GM12878 (cell line): ENCODE measurements at regions of chr5 and their contacts with region 1.

Region 1: DNA sequence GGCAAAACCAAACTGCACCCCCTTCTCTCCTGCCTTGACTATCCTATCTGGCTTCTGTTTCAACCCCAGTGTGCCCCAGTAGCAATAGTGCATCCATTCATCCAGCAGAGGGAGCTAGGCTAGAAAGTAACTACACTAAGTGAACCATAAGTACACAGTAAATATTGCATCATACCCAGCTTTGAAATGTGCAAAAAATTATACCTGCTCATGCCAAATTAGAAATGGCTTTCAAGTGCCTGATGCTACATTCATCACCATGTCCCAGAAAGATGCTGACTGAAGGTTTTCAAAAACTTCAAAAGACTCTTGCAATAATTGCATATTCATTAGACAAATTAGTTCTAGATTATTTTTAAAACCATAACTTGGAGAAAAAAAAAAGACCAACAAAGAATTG is 153.5 kb downstream of the PRELID2 start:
- DNase-seq: peak; percentile 32
- ATAC-seq: peak; percentile 100
- H3K4me3 ChIP-seq: no peak overlapping the region
- H3K27ac ChIP-seq: no peak overlapping the region
- H3K4me1 ChIP-seq: no peaks in the 10 kb centered on the region
- H3K27me3 ChIP-seq: no peaks in the 10 kb centered on the region
- CTCF ChIP-seq: peak; percentile 71 to 78 (median 78)
- EP300 ChIP-seq: no peak
- POLR2A ChIP-seq: no peak
- RAD21 ChIP-seq: peak; percentile 61

Region 2: GRCh38 chr5:145668714-145669113 is 13.0 kb before region 1 on chr5:
- CTCF ChIA-PET with region 1: interaction called, 14 read pairs
- POLR2A ChIA-PET with region 1: no interaction called
- RAD21 ChIA-PET with region 1: no interaction called
- SMC1A ChIA-PET with region 1: no interaction called
- in situ Hi-C with region 1: no loop called
- intact Hi-C with region 1: no loop called
- DNase-seq: no peak
- ATAC-seq: peak; percentile 38; the same call in 2 of the 3 replicates
- H3K4me3 ChIP-seq: no peak overlapping the region
- H3K27ac ChIP-seq: no peak overlapping the region
- H3K4me1 ChIP-seq: no peaks in the 10 kb centered on the region
- H3K27me3 ChIP-seq: no peaks in the 10 kb centered on the region; a peak in 1 of 4 replicates
- CTCF ChIP-seq: no peak
- EP300 ChIP-seq: no peak
- POLR2A ChIP-seq: no peak
- RAD21 ChIP-seq: no peak

Region 3: DNA sequence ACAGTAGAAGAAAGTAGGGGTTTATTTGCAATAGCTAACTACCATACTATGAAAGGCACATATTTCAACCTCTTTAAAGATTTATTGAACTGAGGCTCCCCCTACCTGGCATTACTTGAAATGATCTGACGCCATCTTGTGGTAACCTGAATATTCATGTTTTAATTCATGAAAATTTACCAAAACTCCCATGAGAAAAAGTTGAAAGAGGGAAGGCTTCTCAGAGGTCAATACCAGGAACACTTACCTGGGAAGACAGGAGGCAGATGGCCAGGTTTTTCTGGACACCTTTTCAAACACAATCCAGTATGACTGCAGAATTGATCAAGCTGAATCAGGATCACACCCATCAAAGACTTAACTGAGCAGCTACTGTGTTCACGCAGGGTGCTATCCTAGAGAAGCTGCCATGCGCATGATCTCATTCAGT is 144.1 kb after region 1 on chr5:
- CTCF ChIA-PET with region 1: interaction called, 13 read pairs
- POLR2A ChIA-PET with region 1: no interaction called
- RAD21 ChIA-PET with region 1: interaction called, 5 read pairs
- SMC1A ChIA-PET with region 1: interaction called, 4 read pairs
- in situ Hi-C with region 1: no loop called
- intact Hi-C with region 1: loop called (anchors 1 kb)
- DNase-seq: no peak
- ATAC-seq: peak; percentile 82
- H3K4me3 ChIP-seq: no peak overlapping the region
- H3K27ac ChIP-seq: no peak overlapping the region
- H3K4me1 ChIP-seq: no peaks in the 10 kb centered on the region
- H3K27me3 ChIP-seq: no peaks in the 10 kb centered on the region
- CTCF ChIP-seq: peak; percentile 61 to 73 (median 70)
- EP300 ChIP-seq: no peak
- POLR2A ChIP-seq: no peak
- RAD21 ChIP-seq: peak; percentile 65

Region 4: GRCh38 chr5:145872486-145872885 is 190.8 kb after region 1 on chr5:
- CTCF ChIA-PET with region 1: no interaction called
- POLR2A ChIA-PET with region 1: no interaction called
- RAD21 ChIA-PET with region 1: no interaction called
- SMC1A ChIA-PET with region 1: no interaction called
- in situ Hi-C with region 1: no loop called
- intact Hi-C with region 1: no loop called
- DNase-seq: no peak
- ATAC-seq: no peak
- H3K4me3 ChIP-seq: no peak overlapping the region
- H3K27ac ChIP-seq: no peak overlapping the region
- H3K4me1 ChIP-seq: no peaks in the 10 kb centered on the region
- H3K27me3 ChIP-seq: no peaks in the 10 kb centered on the region
- CTCF ChIP-seq: no peak
- EP300 ChIP-seq: no peak
- POLR2A ChIP-seq: no peak
- RAD21 ChIP-seq: no peak

Region 5: GRCh38 chr5:145903113-145903512 is 221.4 kb after region 1 on chr5:
- CTCF ChIA-PET with region 1: no interaction called
- POLR2A ChIA-PET with region 1: no interaction called
- RAD21 ChIA-PET with region 1: no interaction called
- SMC1A ChIA-PET with region 1: no interaction called
- in situ Hi-C with region 1: no loop called
- intact Hi-C with region 1: no loop called
- DNase-seq: no peak
- ATAC-seq: peak; percentile 62
- H3K4me3 ChIP-seq: no peak overlapping the region
- H3K27ac ChIP-seq: no peak overlapping the region
- H3K4me1 ChIP-seq: no peaks in the 10 kb centered on the region
- H3K27me3 ChIP-seq: no peaks in the 10 kb centered on the region; a peak in 1 of 4 replicates
- CTCF ChIP-seq: no peak; a peak in 1 of 6 replicates
- EP300 ChIP-seq: no peak
- POLR2A ChIP-seq: no peak
- RAD21 ChIP-seq: no peak

Region 6: GRCh38 chr5:146049014-146049703 is 367.5 kb after region 1 on chr5:
- CTCF ChIA-PET with region 1: interaction called, 3 read pairs
- POLR2A ChIA-PET with region 1: no interaction called
- RAD21 ChIA-PET with region 1: no interaction called
- SMC1A ChIA-PET with region 1: no interaction called
- in situ Hi-C with region 1: no loop called
- intact Hi-C with region 1: loop called (anchors 5 kb)
- DNase-seq: no peak
- ATAC-seq: peak; percentile 59
- H3K4me3 ChIP-seq: no peak overlapping the region
- H3K27ac ChIP-seq: no peak overlapping the region
- H3K4me1 ChIP-seq: no peaks in the 10 kb centered on the region
- H3K27me3 ChIP-seq: no peaks in the 10 kb centered on the region; a peak in 3 of 4 replicates
- CTCF ChIP-seq: peak; percentile 34 to 52 (median 40); a peak in 4 of 6 replicates
- EP300 ChIP-seq: no peak
- POLR2A ChIP-seq: no peak
- RAD21 ChIP-seq: peak; percentile 68

Region 7: GRCh38 chr5:146124580-146124979 is 442.9 kb after region 1 on chr5:
- CTCF ChIA-PET with region 1: interaction called, 8 read pairs
- POLR2A ChIA-PET with region 1: no interaction called
- RAD21 ChIA-PET with region 1: no interaction called
- SMC1A ChIA-PET with region 1: interaction called, 3 read pairs
- in situ Hi-C with region 1: loop called (anchors 10 kb)
- intact Hi-C with region 1: no loop called
- DNase-seq: no peak
- ATAC-seq: no peak
- H3K4me3 ChIP-seq: no peak overlapping the region
- H3K27ac ChIP-seq: no peak overlapping the region
- H3K4me1 ChIP-seq: no peaks in the 10 kb centered on the region
- H3K27me3 ChIP-seq: no peaks in the 10 kb centered on the region
- CTCF ChIP-seq: no peak
- EP300 ChIP-seq: no peak
- POLR2A ChIP-seq: no peak
- RAD21 ChIP-seq: no peak

Region 8: DNA sequence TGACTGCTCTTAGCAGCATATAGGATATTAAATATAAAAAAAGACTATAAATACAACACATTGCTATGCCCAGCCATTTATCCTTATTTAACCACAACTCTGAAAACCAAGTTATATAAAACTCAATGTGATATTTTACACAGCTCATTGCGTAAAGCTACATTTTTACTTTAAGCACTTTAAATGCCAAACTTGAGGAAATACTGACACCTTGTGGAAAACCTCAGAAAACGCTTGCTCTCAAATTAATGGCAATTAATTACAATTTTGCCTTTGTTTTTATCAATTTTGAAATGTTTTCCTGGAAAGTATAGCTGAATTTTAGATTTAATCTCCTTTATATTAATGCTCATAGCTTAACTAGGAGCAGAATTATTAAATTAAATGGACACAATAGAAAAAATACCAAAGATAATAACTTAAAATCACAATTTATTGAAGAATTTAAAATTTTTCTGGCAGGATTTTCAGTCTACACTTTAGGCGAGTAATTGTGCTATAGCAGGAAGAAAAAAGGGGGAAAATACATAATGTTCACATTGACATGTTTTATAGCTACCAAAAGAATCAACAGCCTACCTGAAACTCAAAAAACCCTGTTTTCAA is 448.9 kb after region 1 on chr5:
- CTCF ChIA-PET with region 1: interaction called, 8 read pairs
- POLR2A ChIA-PET with region 1: no interaction called
- RAD21 ChIA-PET with region 1: no interaction called
- SMC1A ChIA-PET with region 1: interaction called, 3 read pairs
- in situ Hi-C with region 1: loop called (anchors 10 kb)
- intact Hi-C with region 1: loop called (anchors 2 kb)
- DNase-seq: no peak
- ATAC-seq: no peak
- H3K4me3 ChIP-seq: no peak overlapping the region
- H3K27ac ChIP-seq: no peak overlapping the region
- H3K4me1 ChIP-seq: no peaks in the 10 kb centered on the region
- H3K27me3 ChIP-seq: no peaks in the 10 kb centered on the region
- CTCF ChIP-seq: peak; percentile 30 to 58 (median 49); a peak in 5 of 6 replicates
- EP300 ChIP-seq: no peak
- POLR2A ChIP-seq: no peak
- RAD21 ChIP-seq: peak; percentile 76

Region 9: DNA sequence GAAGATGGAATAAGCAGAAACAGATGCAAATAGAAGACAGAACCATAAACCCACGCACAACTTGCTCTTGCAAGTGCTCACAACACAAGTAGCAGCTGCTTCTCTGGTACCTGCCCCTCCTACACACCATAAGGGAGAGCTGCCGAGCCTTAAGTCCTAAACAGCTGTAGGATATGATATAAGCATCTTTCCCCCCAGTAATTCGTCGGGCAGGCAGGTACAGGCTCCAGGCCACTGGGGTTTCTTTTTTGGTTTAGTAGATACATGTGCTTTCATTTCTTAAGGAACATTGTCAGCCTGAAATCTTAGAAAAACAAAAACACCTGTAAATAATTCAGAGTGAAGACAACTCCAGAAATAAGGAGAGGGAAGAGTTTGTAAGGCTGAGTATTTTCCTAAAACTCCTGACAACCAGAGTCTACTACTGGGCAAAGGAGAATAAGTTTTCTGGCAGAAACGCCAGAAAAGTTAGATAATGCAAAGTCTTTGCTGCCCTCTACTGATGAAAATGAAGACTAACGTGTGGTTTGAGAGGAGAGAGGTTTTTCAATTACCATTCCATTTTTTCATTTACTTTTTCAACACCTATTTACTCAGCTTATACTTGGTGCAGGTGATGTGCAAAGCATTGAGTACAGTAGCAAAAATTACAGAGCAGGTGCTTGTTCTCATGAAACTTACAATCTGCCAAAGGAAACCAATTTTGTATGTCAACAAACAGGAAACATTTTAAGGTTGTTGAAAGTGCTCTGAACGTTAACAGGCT is 745.4 kb after region 1 on chr5:
- CTCF ChIA-PET with region 1: interaction called, 4 read pairs
- POLR2A ChIA-PET with region 1: no interaction called
- RAD21 ChIA-PET with region 1: no interaction called
- SMC1A ChIA-PET with region 1: no interaction called
- in situ Hi-C with region 1: loop called (anchors 10 kb)
- intact Hi-C with region 1: loop called (anchors 2 kb)
- DNase-seq: no peak
- ATAC-seq: peak; percentile 88
- H3K4me3 ChIP-seq: no peak overlapping the region
- H3K27ac ChIP-seq: no peak overlapping the region
- H3K4me1 ChIP-seq: no peaks in the 10 kb centered on the region
- H3K27me3 ChIP-seq: no peaks in the 10 kb centered on the region; a peak in 2 of 4 replicates
- CTCF ChIP-seq: peak; percentile 57 to 77 (median 62); a peak in 5 of 6 replicates
- EP300 ChIP-seq: no peak
- POLR2A ChIP-seq: no peak
- RAD21 ChIP-seq: peak; percentile 82